ENCODE measurements at regions of chr3 and their contacts with region 1.

Region 1: GRCh38 chr3:53072653-53073552 is 27.0 kb upstream of the SFMBT1 start:
- DNase-seq: peak; percentile 90
- CTCF ChIP-seq: peak; percentile 90

Region 2: DNA sequence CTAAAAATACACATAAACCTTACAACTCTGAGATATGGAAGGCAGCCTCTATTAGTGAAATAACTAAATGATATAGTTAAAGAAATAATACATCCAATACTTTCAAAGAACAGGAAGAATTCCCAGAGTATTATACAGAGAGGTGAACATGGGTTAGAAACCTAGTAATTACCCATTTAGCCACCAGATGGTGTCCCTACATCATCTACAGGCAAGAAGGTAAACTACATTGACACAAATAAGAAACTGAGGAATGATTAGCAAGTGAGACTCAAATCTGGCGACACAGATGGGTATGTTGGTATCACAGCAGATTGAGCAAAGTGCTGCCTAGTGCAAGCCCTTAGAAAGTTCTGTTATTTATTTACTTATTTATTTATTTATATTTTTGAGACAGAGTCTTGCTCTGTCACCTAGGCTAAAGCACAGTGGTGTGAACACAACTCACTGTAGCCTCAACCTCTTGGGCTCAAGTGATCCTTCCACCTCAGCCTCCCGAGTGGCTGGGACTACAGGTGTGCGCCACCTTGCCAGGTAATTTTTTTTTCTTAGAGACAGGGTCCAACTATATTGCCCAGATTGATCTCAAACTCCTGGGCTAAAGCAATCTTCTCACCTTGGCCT is 330.4 kb before region 1 on chr3:
- in situ Hi-C with region 1: loop called (anchors 25 kb)
- DNase-seq: peak; percentile 63
- CTCF ChIP-seq: peak; percentile 56

Region 3: DNA sequence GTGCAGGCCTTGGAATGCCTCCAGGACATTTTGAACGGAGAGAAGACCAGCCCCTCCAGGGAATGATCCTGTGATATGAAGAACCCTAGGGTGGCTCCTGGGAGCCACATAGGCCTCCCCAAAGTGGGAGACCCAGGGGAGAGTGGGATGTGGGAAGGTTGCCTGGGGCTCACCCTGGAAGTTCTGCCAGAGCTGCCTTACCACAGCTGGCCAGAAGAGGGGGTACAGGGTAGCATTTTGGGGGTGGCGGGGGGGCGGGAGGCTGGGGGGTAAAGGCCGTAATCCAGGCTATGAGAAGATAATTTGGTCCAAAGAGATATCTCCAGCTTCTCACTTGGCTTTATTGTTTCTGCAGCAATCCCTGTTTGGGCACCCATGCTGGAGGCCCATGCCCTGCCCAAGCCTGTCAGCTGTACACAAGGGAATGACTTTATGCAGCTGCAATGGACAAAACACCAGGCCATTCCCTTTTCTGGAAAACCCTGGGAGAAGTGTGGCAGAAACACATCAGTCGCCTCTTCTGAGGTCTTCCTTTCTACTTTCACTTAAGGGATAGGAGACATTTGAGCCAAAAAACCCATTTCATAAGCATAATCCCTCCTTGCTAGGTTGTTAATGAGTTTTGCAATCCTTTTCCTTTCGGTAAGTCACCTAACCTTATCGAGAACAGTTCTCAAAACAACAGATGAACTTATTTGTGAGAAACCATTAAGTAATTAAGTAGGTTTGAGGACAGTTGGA is 227.0 kb before region 1 on chr3:
- in situ Hi-C with region 1: loop called (anchors 10 kb)
- DNase-seq: no peak
- CTCF ChIP-seq: peak; percentile 27

Region 4: DNA sequence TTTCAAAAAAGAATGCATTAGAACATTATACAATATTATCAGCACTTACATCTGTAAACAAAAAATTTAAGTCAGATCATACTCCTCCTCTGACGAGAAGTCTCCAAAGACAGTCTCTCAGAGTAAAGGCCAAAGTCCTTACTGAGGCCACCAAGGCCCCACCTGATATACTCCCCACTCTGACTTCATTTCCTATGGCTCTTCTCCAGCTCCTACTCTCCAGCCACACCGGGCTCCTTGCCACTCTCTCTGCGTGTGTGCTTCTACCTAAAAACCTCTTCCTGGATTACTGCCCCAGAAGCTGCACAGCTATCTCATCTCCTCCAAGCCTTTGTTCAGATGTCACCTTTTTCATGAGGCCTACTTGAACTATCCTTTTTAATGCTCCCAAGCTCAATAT is 269.4 kb after region 1 on chr3:
- in situ Hi-C with region 1: no loop called
- DNase-seq: no peak
- CTCF ChIP-seq: no peak

Measured in GM13976 (cell line).